ENCODE measurements at regions of chr12 and their contacts with region 1.

Region 1: GRCh38 chr12:6752921-6753771 is at the start of gene MLF2:
- DNase-seq: peak; percentile 94
- ATAC-seq: peak; percentile 95
- H3K4me3 ChIP-seq: peak within 1 kb of the TSS; percentile 80
- H3K27ac ChIP-seq: peak within 1 kb of the TSS; percentile 99
- H3K4me1 ChIP-seq: peaks cover 11% of the 10 kb centered on the region
- H3K27me3 ChIP-seq: no peaks in the 10 kb centered on the region
- CTCF ChIP-seq: peak; percentile 95 to 99 (median 97); a peak in 3 of 6 replicates
- EP300 ChIP-seq: peak in 1 of 2 experiments; percentile 40; a peak in 1 of 4 replicates
- POLR2A ChIP-seq: peak; percentile 93
- RAD21 ChIP-seq: no peak
- polyA plus RNA-seq, gene MLF2: 13.5 to 21.5 TPM

Region 2: DNA sequence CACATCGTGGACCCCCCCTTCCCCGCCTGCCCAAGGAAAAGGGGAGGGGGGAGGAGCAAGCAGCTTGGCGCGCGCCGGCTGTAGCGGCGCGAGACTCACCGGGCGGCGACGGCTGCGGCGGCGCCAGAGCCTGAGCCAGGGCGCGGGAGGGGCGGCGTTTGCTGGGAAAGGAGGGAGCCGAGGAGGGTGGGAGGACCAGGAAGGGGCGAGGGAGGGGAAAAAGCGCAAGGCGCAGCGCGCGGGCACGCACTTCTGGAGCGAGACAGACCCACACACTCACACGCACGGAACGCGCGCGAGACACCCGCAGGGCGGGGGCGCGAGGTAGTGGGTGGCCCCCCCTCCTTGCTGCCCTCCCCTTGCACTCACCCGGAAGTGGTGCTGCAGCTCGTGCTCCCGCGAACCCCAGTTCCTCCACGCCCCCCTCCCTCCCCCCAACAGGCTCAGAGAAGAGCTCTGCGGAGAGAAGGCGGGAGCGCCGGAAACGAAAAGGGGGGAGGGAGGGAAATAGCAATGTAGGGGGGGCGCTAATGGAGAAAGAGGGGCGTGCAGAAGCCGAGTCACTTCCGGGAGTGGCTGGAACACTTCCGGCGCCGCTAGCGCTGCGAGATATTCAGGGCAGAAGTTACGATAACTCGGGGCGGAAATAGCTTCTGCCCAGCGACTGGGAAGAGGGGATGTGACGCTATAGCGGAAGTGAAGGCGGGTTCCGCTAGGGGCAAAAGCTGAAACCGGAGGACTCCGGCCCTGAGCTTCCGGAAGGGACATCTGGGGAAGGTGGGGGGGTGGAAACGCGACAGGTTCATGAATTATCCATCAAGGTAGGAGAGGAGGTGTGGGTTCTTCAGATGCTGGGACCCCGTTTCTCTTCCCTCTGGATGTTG is 63.9 kb before region 1 on chr12 and contains the start of gene ZNF384:
- CTCF ChIA-PET with region 1: interaction called, 5 read pairs
- POLR2A ChIA-PET with region 1: interaction called, 14 read pairs
- RAD21 ChIA-PET with region 1: interaction called, 14 read pairs
- SMC1A ChIA-PET with region 1: interaction called, 9 read pairs
- in situ Hi-C with region 1: no loop called
- intact Hi-C with region 1: loop called (anchors 1 kb)
- DNase-seq: peak; percentile 97
- ATAC-seq: peak; percentile 83
- H3K4me3 ChIP-seq: peak within 1 kb of the TSS; percentile 80
- H3K27ac ChIP-seq: peak within 1 kb of the TSS; percentile 97
- H3K4me1 ChIP-seq: peaks cover 10% of the 10 kb centered on the region; the same call in 1 of the 2 replicates
- H3K27me3 ChIP-seq: no peaks in the 10 kb centered on the region
- CTCF ChIP-seq: 0 out of 6 replicates have a peak, but pooled peaks of 1 of the 3 experiments have one; percentile 0
- EP300 ChIP-seq: peak in 1 of 2 experiments; percentile 17; a peak in 1 of 4 replicates
- POLR2A ChIP-seq: peak; percentile 88
- RAD21 ChIP-seq: no peak
- polyA plus RNA-seq, gene ZNF384: 0.46 to 1.3 TPM

Region 3: GRCh38 chr12:6764011-6764828 is 11.1 kb after region 1 on chr12:
- CTCF ChIA-PET with region 1: interaction called, 67 read pairs
- POLR2A ChIA-PET with region 1: interaction called, 60 read pairs
- RAD21 ChIA-PET with region 1: interaction called, 51 read pairs
- SMC1A ChIA-PET with region 1: interaction called, 39 read pairs
- in situ Hi-C with region 1: no loop called
- intact Hi-C with region 1: loop called (anchors 1 kb)
- DNase-seq: peak; percentile 98
- ATAC-seq: peak; percentile 94
- H3K4me3 ChIP-seq: peak overlapping the region; percentile 38; the same call in 1 of the 2 replicates
- H3K27ac ChIP-seq: peak overlapping the region; percentile 76
- H3K4me1 ChIP-seq: peaks cover 30% of the 10 kb centered on the region
- H3K27me3 ChIP-seq: no peaks in the 10 kb centered on the region
- CTCF ChIP-seq: no peak
- EP300 ChIP-seq: no peak
- POLR2A ChIP-seq: no peak; the same call in 1 of the 2 replicates
- RAD21 ChIP-seq: no peak

Region 4: GRCh38 chr12:6784296-6784695 is 31.1 kb after region 1 on chr12:
- CTCF ChIA-PET with region 1: interaction called, 221 read pairs
- POLR2A ChIA-PET with region 1: interaction called, 11 read pairs
- RAD21 ChIA-PET with region 1: interaction called, 42 read pairs
- SMC1A ChIA-PET with region 1: interaction called, 84 read pairs
- in situ Hi-C with region 1: no loop called
- intact Hi-C with region 1: loop called (anchors 1 kb)
- DNase-seq: no peak
- ATAC-seq: peak; percentile 27; the same call in 2 of the 3 replicates
- H3K4me3 ChIP-seq: no peak overlapping the region
- H3K27ac ChIP-seq: no peak overlapping the region
- H3K4me1 ChIP-seq: 0 out of 2 replicates have a peak, but pooled peaks cover 2% of the 10 kb centered on the region
- H3K27me3 ChIP-seq: no peaks in the 10 kb centered on the region
- CTCF ChIP-seq: no peak
- EP300 ChIP-seq: no peak
- POLR2A ChIP-seq: no peak
- RAD21 ChIP-seq: no peak

Region 5: DNA sequence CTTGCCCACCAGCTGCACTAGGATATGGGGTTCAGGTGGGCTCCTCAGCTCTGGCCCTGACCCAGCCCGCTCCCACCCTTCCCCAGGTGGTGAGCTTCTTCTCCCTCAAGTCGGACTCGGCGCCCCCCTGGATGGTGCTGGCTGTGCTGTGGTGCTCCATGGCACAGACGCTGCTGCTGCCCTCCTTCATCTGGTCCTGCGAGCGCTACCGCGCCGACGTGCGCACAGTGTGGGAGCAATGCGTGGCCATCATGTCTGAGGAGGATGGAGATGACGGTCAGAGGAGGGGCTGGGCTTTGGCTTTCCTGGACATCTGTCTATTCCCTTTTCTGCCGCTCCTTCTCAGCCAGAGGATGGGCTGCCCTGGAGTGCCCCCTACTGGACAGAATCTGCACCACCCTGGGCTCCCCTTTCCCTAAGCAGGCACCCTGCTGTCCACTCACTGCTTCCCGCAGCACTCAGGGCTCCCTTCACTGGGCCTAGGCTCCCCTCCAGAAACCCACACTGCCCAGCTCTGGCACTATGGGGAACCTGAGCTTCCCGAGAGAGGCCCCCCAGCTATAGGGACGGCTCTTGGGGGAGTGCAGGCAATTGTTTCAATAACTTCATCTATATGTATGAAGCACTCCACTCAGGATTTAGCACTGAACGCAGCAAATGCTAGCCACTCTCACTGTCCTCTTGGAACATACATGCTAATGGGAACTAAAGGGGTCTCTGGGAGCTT is 72.4 kb after region 1 on chr12:
- CTCF ChIA-PET with region 1: interaction called, 71 read pairs
- POLR2A ChIA-PET with region 1: interaction called, 3 read pairs
- RAD21 ChIA-PET with region 1: interaction called, 25 read pairs
- SMC1A ChIA-PET with region 1: interaction called, 23 read pairs
- in situ Hi-C with region 1: loop called (anchors 5 kb)
- intact Hi-C with region 1: loop called (anchors 1 kb)
- DNase-seq: no peak
- ATAC-seq: peak; percentile 88
- H3K4me3 ChIP-seq: no peak overlapping the region
- H3K27ac ChIP-seq: no peak overlapping the region
- H3K4me1 ChIP-seq: peaks cover 4% of the 10 kb centered on the region
- H3K27me3 ChIP-seq: peaks cover 27 to 35% of the 10 kb centered on the region in 2 experiments
- CTCF ChIP-seq: peak; percentile 90 to 96 (median 92)
- EP300 ChIP-seq: no peak
- POLR2A ChIP-seq: no peak
- RAD21 ChIP-seq: peak; percentile 86

Region 6: GRCh38 chr12:6851921-6852650 is 98.9 kb after region 1 on chr12 and contains the start of gene USP5:
- CTCF ChIA-PET with region 1: interaction called, 22 read pairs
- POLR2A ChIA-PET with region 1: interaction called, 27 read pairs
- RAD21 ChIA-PET with region 1: interaction called, 20 read pairs
- SMC1A ChIA-PET with region 1: interaction called, 15 read pairs
- in situ Hi-C with region 1: no loop called
- intact Hi-C with region 1: no loop called
- DNase-seq: peak; percentile 99
- ATAC-seq: peak; percentile 87
- H3K4me3 ChIP-seq: peak within 1 kb of the TSS; percentile 82
- H3K27ac ChIP-seq: peak within 1 kb of the TSS; percentile 84
- H3K4me1 ChIP-seq: peaks cover 28% of the 10 kb centered on the region
- H3K27me3 ChIP-seq: no peaks in the 10 kb centered on the region
- CTCF ChIP-seq: no peak
- EP300 ChIP-seq: no peak
- POLR2A ChIP-seq: peak; percentile 89
- RAD21 ChIP-seq: no peak
- polyA plus RNA-seq, gene USP5: 2.5 to 5.2 TPM

Measured in GM12878 (cell line).